Mammary epithelial cell (primary cell): ENCODE measurements at regions of chr9 and their contacts with region 1.

Region 1: GRCh38 chr9:135085830-135086546 is 1.5 kb upstream of the OLFM1 start:
- DNase-seq: peak; percentile 33
- H3K4me3 ChIP-seq: no peak overlapping the region
- H3K27ac ChIP-seq: no peak overlapping the region
- H3K4me1 ChIP-seq: no peaks in the 10 kb centered on the region
- H3K27me3 ChIP-seq: peaks cover 17% of the 10 kb centered on the region
- CTCF ChIP-seq: peak; percentile 53 to 73

Region 2: GRCh38 chr9:135343837-135344522 is 258.0 kb after region 1 on chr9:
- CTCF ChIA-PET with region 1: no interaction called
- dilution Hi-C with region 1: no loop called
- in situ Hi-C with region 1: no loop called
- intact Hi-C with region 1: loop called (anchors 10 kb)
- DNase-seq: peak; percentile 9
- H3K4me3 ChIP-seq: no peak overlapping the region
- H3K27ac ChIP-seq: no peak overlapping the region
- H3K4me1 ChIP-seq: no peaks in the 10 kb centered on the region
- H3K27me3 ChIP-seq: no peaks in the 10 kb centered on the region
- CTCF ChIP-seq: peak; percentile 10 to 39